ENCODE measurements at regions of chr1 and their contacts with region 1.

Region 1: DNA sequence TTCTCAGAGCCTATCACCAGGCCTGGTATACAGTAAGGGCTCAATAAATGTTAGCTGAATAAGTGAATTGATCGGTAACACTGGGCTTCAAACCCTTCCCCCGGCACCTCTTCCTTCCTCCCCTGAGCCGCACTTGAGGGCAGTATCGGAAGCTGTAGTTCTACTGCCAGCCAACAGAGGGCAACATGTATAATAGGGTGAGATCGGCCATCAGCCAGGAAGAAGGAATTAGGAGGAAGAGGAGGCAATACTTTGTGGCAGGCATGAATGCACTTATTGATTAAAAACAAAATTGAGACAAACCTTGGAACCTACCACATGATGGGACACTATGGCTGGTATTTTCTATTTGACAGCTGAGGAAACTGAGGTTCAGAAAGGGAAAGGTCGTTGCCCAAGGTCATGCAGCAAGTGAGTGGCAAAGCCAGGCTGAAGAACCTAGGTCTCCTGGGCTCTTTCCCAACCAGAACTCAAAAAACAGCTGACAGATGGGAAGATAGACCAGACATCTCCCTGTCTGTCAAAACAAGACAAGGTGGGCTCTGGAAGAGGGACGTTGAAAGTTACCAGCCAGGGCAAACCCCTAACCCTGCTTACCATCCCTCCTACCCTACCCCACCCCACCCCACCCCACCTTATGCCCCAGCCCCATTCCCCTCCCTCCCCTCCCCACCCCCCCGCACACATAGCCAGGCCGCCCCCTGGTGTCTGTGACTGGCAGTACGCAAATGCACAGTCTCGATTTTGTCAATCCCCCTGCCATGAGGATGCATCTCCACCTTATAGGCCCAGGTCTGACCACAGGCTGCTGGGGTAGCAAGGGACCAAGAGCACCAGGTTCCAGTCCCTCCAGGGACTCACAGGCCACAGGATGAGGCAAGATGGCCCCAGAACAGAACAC is 107.3 kb upstream of the RUNX3 start:
- DNase-seq: peak; percentile 50
- H3K4me3 Mint-ChIP-seq: no peak overlapping the region
- H3K27ac Mint-ChIP-seq: peak overlapping the region; percentile 4
- H3K4me1 Mint-ChIP-seq: peaks cover 32% of the 10 kb centered on the region
- H3K27me3 Mint-ChIP-seq: peaks cover 7% of the 10 kb centered on the region

Region 2: DNA sequence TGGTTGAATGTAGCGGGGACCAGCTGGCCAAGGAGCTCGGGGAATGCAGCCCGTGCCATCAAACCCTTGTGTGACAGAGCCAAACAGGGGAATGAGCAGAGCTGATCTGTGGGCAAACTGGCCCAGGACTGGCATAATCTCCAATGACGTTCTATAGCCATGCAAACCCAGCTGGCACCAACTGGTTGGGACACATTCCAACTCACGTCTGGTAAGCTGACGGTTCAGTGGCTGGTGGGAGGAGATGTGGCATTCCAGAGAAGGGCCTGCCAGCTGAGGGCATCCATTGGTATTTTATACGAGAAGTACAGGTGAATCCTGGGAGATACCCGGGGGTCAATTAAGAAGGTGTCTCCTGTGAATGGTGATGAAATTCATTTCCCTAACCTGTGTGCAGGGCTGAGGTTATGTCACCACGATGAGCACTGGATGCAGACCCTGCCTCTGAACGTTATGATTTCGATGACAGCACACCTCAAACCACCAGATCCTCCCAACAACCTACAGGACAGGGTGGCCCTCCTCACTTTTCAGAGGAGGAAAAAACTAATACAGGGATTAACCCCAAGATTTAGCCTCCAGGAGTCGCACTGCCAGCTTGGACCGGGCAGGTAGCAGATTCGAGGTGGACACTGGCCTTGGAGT is 68.4 kb before region 1 on chr1:
- intact Hi-C with region 1: no loop called
- DNase-seq: no peak
- H3K4me3 Mint-ChIP-seq: no peak overlapping the region
- H3K27ac Mint-ChIP-seq: peak overlapping the region; percentile 54
- H3K4me1 Mint-ChIP-seq: peaks cover 86% of the 10 kb centered on the region
- H3K27me3 Mint-ChIP-seq: no peaks in the 10 kb centered on the region

Region 3: DNA sequence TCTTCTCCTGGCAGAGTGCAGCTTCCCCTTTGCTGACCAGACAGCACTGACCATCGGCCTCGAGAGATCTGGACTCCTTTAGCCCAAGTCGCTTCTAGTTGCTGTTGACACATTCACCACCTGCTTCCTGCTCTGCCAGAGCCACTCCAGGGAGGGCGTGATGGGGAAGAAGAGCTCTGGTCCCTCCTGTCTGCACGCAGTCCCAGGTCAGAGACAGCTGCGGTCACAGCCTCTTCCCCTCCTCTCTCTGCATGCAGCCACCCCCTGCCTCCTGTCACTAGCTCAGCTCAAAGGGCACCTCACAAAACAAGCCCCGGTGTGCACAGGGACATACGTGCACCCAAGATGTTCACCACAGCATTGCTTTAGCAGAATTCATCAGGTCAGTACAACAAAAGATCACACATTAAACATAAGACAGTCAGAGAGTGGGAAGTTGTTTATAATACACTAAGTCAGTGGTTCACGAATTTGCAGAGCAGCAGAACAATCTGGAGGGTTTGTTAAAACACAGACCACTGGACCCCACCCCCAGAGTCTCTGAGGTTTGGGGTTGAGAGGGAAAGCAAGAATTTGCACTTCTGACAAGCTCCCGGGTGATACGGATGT is 62.0 kb after region 1 on chr1:
- intact Hi-C with region 1: loop called (anchors 1 kb)
- DNase-seq: peak; percentile 37
- H3K4me3 Mint-ChIP-seq: peak overlapping the region; percentile 68
- H3K27ac Mint-ChIP-seq: peak overlapping the region; percentile 88
- H3K4me1 Mint-ChIP-seq: peaks cover 84% of the 10 kb centered on the region
- H3K27me3 Mint-ChIP-seq: peaks cover 2% of the 10 kb centered on the region

Region 4: DNA sequence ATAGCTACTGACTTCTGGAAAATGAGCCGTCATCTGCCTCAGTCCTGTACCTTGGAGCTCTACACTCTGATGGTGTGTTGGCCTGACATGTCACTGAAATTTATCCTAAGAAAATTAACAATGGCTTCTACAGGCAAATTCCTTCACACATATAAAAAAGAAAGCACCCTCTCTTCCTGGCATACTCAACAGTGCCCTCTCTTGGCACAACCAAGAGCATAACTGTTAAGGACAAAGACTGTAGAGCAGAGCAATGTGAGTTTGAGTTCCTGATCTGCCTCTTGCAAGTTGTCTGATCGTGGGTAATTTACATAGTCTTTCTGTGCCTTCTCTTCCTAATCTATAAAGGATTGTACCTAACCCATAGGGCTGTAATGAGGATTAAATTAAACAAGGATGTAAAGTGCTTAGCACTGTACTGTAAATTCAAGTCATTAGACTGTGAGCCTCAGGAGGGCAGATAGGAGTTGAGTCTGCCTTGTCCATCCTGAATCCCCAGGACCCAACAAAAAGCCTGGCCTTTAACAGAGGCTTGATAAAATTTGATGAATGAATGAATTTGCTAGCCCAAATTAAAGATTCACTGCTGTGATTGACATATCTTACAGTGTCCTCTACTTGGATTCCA is 111.4 kb after region 1 on chr1:
- intact Hi-C with region 1: loop called (anchors 1 kb)
- DNase-seq: peak; percentile 29
- H3K4me3 Mint-ChIP-seq: no peak overlapping the region
- H3K27ac Mint-ChIP-seq: no peak overlapping the region
- H3K4me1 Mint-ChIP-seq: peaks cover 9% of the 10 kb centered on the region
- H3K27me3 Mint-ChIP-seq: peaks cover 38% of the 10 kb centered on the region